Testis (tissue), 5 donors: ENCODE measurements at regions of chr7 and their contacts with region 1.

Region 1: GRCh38 chr7:47266131-47266706 is 315.7 kb downstream of the TNS3 start:
- DNase-seq: peak; percentile 71
- H3K4me3 ChIP-seq: no peak overlapping the region
- H3K27ac ChIP-seq: no peak overlapping the region
- H3K4me1 ChIP-seq: no peaks in the 10 kb centered on the region
- H3K27me3 ChIP-seq: no peaks in the 10 kb centered on the region
- CTCF ChIP-seq: peak; percentile 93
- POLR2A ChIP-seq: no peak

Region 2: DNA sequence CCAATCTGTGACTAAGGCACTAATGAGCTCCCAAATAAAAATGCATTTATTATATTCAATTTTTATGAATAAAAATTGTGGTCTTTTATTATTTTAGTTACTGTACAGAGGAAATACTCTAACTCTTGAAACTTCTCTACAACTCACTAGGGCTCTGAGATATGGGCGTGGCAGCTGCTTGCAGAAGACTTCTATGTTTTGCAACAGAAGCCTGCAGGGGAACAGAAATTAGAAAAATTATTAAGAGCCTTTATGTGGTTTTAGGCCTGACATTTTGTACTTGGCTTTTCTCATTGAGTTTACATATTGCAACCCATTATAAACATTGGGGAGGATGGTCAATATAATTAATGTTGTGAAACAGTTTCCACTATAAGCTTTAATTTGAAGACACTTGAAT is 265.7 kb before region 1 on chr7:
- intact Hi-C with region 1: no loop called
- DNase-seq: no peak
- H3K4me3 ChIP-seq: no peak overlapping the region
- H3K27ac ChIP-seq: no peak overlapping the region
- H3K4me1 ChIP-seq: peaks cover 4% of the 10 kb centered on the region
- H3K27me3 ChIP-seq: no peaks in the 10 kb centered on the region
- CTCF ChIP-seq: no peak
- POLR2A ChIP-seq: no peak

Region 3: GRCh38 chr7:47833211-47833610 is 567.0 kb after region 1 on chr7:
- intact Hi-C with region 1: loop called (anchors 5 kb)
- DNase-seq: no peak
- H3K4me3 ChIP-seq: no peak overlapping the region
- H3K27ac ChIP-seq: no peak overlapping the region
- H3K4me1 ChIP-seq: no peaks in the 10 kb centered on the region
- H3K27me3 ChIP-seq: no peaks in the 10 kb centered on the region
- CTCF ChIP-seq: no peak
- POLR2A ChIP-seq: no peak